CD4-positive, alpha-beta T cell (primary cell): ENCODE measurements at regions of chr1 and their contacts with region 1.

Region 1: GRCh38 chr1:89454845-89455521 is 69.6 kb upstream of the LRRC8B start:
- DNase-seq: peak; percentile 37 to 80 (median 51)
- ATAC-seq: peak; percentile 96
- H3K4me3 ChIP-seq: no peak overlapping the region
- H3K4me3 Mint-ChIP-seq: no peak overlapping the region
- H3K27ac ChIP-seq: no peak overlapping the region
- H3K27ac Mint-ChIP-seq: no peak overlapping the region
- H3K4me1 ChIP-seq: no peaks in the 10 kb centered on the region
- H3K4me1 Mint-ChIP-seq: peaks cover 9% of the 10 kb centered on the region
- H3K27me3 ChIP-seq: no peaks in the 10 kb centered on the region
- H3K27me3 Mint-ChIP-seq: peaks cover 4% of the 10 kb centered on the region
- CTCF ChIP-seq: peak; percentile 84

Region 2: DNA sequence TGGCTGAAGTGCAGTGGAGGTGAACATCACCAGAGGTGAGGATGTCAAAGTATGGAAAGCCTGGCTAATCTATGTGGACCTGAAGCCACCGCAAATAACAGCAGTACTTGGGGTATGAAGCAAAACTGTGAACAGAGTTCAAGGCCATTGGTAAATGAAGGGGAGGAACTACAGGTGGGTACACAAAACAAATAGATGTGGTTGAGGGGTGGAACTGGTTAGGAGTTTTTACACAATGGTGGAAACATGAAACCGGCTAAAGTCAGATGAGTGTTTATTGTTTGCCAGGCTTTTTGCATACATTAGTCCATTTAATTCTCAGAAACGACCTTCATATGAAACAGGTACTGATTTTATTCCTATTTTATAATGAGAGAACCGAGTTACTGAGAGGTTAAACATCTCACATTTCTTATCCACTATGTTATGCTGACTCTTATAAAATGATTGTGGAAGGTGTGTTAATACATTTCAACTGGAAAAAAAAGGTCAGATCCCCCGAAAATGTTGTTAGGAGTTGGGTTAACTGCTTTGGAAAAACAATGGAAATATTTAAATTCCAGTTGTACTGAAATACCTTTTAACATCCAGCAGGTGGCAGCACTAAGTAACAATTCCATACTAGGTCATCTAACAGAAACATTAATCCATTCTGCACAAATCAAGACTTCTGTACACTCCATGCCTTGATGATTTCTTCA is 519.3 kb before region 1 on chr1:
- CTCF ChIA-PET with region 1: no interaction called
- POLR2A ChIA-PET with region 1: no interaction called
- intact Hi-C with region 1: loop called (anchors 1 to 10 kb)
- DNase-seq: peak in 4 of 14 experiments; percentile 25 to 68 (median 54)
- ATAC-seq: peak; percentile 66
- H3K4me3 ChIP-seq: no peak overlapping the region
- H3K4me3 Mint-ChIP-seq: no peak overlapping the region
- H3K27ac ChIP-seq: no peak overlapping the region
- H3K27ac Mint-ChIP-seq: no peak overlapping the region
- H3K4me1 ChIP-seq: no peaks in the 10 kb centered on the region
- H3K4me1 Mint-ChIP-seq: no peaks in the 10 kb centered on the region
- H3K27me3 ChIP-seq: no peaks in the 10 kb centered on the region
- H3K27me3 Mint-ChIP-seq: no peaks in the 10 kb centered on the region
- CTCF ChIP-seq: peak; percentile 77

Region 3: GRCh38 chr1:88973520-88974137 is 481.4 kb before region 1 on chr1:
- CTCF ChIA-PET with region 1: interaction called, 4 read pairs
- POLR2A ChIA-PET with region 1: no interaction called
- intact Hi-C with region 1: loop called in 1 of 2 experiments (anchors 1 kb)
- DNase-seq: peak in 3 of 14 experiments; percentile 52 to 68 (median 62)
- ATAC-seq: peak; percentile 44
- H3K4me3 ChIP-seq: no peak overlapping the region
- H3K4me3 Mint-ChIP-seq: no peak overlapping the region
- H3K27ac ChIP-seq: no peak overlapping the region
- H3K27ac Mint-ChIP-seq: no peak overlapping the region
- H3K4me1 ChIP-seq: peaks cover 3% of the 10 kb centered on the region
- H3K4me1 Mint-ChIP-seq: peaks cover 25% of the 10 kb centered on the region
- H3K27me3 ChIP-seq: no peaks in the 10 kb centered on the region
- H3K27me3 Mint-ChIP-seq: no peaks in the 10 kb centered on the region
- CTCF ChIP-seq: peak; percentile 91

Region 4: GRCh38 chr1:88983791-88984559 is 471.0 kb before region 1 on chr1:
- CTCF ChIA-PET with region 1: interaction called, 10 read pairs
- POLR2A ChIA-PET with region 1: no interaction called
- intact Hi-C with region 1: loop called in 1 of 2 experiments (anchors 2 kb)
- DNase-seq: peak in 6 of 14 experiments; percentile 23 to 82 (median 60)
- ATAC-seq: peak; percentile 88
- H3K4me3 ChIP-seq: peak overlapping the region; percentile 9
- H3K4me3 Mint-ChIP-seq: peak overlapping the region; percentile 8
- H3K27ac ChIP-seq: no peak overlapping the region
- H3K27ac Mint-ChIP-seq: peak overlapping the region; percentile 48
- H3K4me1 ChIP-seq: peaks cover 12% of the 10 kb centered on the region
- H3K4me1 Mint-ChIP-seq: peaks cover 72% of the 10 kb centered on the region
- H3K27me3 ChIP-seq: no peaks in the 10 kb centered on the region
- H3K27me3 Mint-ChIP-seq: no peaks in the 10 kb centered on the region
- CTCF ChIP-seq: peak; percentile 81

Region 5: DNA sequence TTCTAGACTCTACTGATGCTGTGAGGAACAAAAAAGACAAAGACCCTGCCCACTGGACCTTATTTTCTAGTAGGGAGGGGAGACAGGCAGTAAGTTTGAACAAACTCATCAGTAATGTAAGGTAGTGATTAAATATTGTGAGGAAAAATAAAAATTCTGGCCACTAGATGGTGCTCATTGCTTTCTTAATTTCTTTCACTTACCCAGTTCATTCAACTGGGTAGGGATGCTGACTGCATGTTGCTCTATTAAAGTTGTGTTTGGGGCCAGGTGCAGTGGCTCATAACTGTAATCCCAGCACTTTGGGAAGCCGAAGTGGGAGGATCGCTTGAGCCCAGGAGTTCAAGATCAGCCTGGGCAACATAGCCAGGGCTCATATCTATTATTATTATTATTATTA is 456.3 kb before region 1 on chr1:
- CTCF ChIA-PET with region 1: interaction called, 3 read pairs
- POLR2A ChIA-PET with region 1: interaction called, 3 read pairs
- intact Hi-C with region 1: loop called (anchors 1 kb)
- DNase-seq: peak in 4 of 14 experiments; percentile 32 to 85 (median 84)
- ATAC-seq: peak; percentile 88
- H3K4me3 ChIP-seq: no peak overlapping the region
- H3K4me3 Mint-ChIP-seq: peak overlapping the region; percentile 50
- H3K27ac ChIP-seq: no peak overlapping the region
- H3K27ac Mint-ChIP-seq: no peak overlapping the region
- H3K4me1 ChIP-seq: peaks cover 12% of the 10 kb centered on the region
- H3K4me1 Mint-ChIP-seq: peaks cover 40% of the 10 kb centered on the region
- H3K27me3 ChIP-seq: no peaks in the 10 kb centered on the region
- H3K27me3 Mint-ChIP-seq: no peaks in the 10 kb centered on the region
- CTCF ChIP-seq: peak; percentile 64

Region 6: GRCh38 chr1:89085781-89086180 is 369.2 kb before region 1 on chr1:
- CTCF ChIA-PET with region 1: interaction called, 13 read pairs
- POLR2A ChIA-PET with region 1: interaction called, 4 read pairs
- intact Hi-C with region 1: loop called (anchors 1 kb)
- DNase-seq: peak in 9 of 14 experiments; percentile 13 to 79 (median 48)
- ATAC-seq: peak; percentile 77
- H3K4me3 ChIP-seq: no peak overlapping the region
- H3K4me3 Mint-ChIP-seq: no peak overlapping the region
- H3K27ac ChIP-seq: no peak overlapping the region
- H3K27ac Mint-ChIP-seq: no peak overlapping the region
- H3K4me1 ChIP-seq: no peaks in the 10 kb centered on the region
- H3K4me1 Mint-ChIP-seq: no peaks in the 10 kb centered on the region
- H3K27me3 ChIP-seq: no peaks in the 10 kb centered on the region
- H3K27me3 Mint-ChIP-seq: no peaks in the 10 kb centered on the region
- CTCF ChIP-seq: peak; percentile 85